ENCODE measurements at regions of chr1 and their contacts with region 1.

Region 1: GRCh38 chr1:50774759-50775351 is 185.2 kb downstream of the FAF1 start:
- DNase-seq: no peak
- ATAC-seq: no peak
- H3K4me3 ChIP-seq: no peak overlapping the region
- H3K27ac ChIP-seq: no peak overlapping the region
- H3K4me1 ChIP-seq: no peaks in the 10 kb centered on the region
- H3K27me3 ChIP-seq: no peaks in the 10 kb centered on the region

Region 2: DNA sequence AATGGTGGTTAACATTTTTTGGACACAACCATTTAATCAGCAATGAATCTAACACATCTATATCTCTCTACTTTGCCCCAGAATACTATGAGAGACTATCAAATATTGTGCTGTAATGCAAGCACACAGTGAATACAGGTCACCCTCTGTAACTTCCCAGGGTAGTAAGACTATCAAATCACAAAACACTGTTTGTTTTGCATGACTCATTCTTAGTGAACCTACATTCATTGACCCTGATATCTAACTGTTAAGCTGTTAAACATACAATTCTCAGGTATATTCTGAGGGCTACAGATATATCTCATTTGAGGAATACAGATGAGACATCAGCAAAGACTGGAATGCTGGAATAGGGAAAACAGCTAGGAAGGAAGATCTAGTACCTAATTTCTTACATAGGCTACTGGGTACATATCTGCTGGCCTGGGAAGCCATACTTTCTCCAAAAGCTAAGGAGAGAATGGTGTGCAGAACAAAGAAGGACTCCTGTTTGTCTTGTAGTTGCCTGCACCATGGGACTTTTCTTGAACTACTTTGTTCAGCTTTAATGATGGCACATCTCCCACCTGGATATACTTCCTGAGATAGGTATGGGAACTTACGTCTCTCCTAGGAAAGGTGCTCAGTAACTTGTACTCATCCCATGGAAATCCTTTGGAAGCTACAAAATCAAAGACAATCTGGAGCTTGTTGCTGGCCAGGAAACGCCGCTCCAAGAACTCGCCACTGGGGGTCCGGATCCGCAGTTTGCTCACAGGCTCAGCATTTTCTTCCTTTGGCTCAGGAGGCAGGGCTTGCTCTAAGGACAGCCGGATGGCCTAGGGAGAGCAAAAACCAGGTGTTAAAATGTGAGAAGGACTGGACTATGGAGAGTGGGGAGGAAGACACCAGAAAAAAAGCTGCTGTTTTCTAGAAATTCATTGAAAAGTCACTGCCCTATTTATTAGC is 299.7 kb before region 1 on chr1:
- intact Hi-C with region 1: no loop called
- DNase-seq: no peak
- ATAC-seq: no peak
- H3K4me3 ChIP-seq: no peak overlapping the region
- H3K27ac ChIP-seq: no peak overlapping the region
- H3K4me1 ChIP-seq: no peaks in the 10 kb centered on the region
- H3K27me3 ChIP-seq: no peaks in the 10 kb centered on the region

Region 3: GRCh38 chr1:50929376-50929958 is 154.6 kb after region 1 on chr1:
- intact Hi-C with region 1: loop called in 1 of 2 experiments (anchors 10 kb)
- DNase-seq: no peak
- ATAC-seq: no peak
- H3K4me3 ChIP-seq: no peak overlapping the region
- H3K27ac ChIP-seq: no peak overlapping the region
- H3K4me1 ChIP-seq: no peaks in the 10 kb centered on the region
- H3K27me3 ChIP-seq: no peaks in the 10 kb centered on the region

Region 4: GRCh38 chr1:50959913-50960844 is 185.3 kb after region 1 on chr1 and contains the start of gene FAF1:
- intact Hi-C with region 1: loop called in 1 of 2 experiments (anchors 10 kb)
- DNase-seq: peak; percentile 98 to 99
- ATAC-seq: peak; percentile 100
- H3K4me3 ChIP-seq: peak within 1 kb of the TSS; percentile 84 to 94
- H3K27ac ChIP-seq: peak within 1 kb of the TSS in 1 of 2 donors; percentile 72
- H3K4me1 ChIP-seq: no peaks in the 10 kb centered on the region
- H3K27me3 ChIP-seq: no peaks in the 10 kb centered on the region
- total RNA-seq, gene FAF1: 54.7 to 56.1 TPM

Region 5: DNA sequence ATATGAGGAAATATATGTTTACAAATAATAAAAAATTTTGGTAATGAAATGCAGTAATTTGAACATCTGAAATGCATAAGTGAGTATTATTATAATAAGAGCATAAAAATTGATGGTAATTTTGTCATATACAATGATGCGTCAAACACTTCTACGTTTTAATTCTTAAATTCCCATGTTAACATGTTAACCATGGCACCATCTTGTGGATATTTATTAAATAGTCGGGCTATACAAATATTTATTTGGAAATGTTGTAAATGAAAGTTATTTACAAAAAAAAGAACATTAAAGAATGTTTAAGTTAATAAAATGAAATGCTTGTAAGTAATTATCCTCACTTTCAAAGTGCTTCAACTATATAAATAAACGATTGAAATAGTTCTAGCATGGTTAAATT is 270.0 kb after region 1 on chr1:
- intact Hi-C with region 1: loop called (anchors 5 to 10 kb)
- DNase-seq: no peak
- ATAC-seq: no peak
- H3K4me3 ChIP-seq: no peak overlapping the region
- H3K27ac ChIP-seq: no peak overlapping the region
- H3K4me1 ChIP-seq: no peaks in the 10 kb centered on the region
- H3K27me3 ChIP-seq: no peaks in the 10 kb centered on the region

Region 6: DNA sequence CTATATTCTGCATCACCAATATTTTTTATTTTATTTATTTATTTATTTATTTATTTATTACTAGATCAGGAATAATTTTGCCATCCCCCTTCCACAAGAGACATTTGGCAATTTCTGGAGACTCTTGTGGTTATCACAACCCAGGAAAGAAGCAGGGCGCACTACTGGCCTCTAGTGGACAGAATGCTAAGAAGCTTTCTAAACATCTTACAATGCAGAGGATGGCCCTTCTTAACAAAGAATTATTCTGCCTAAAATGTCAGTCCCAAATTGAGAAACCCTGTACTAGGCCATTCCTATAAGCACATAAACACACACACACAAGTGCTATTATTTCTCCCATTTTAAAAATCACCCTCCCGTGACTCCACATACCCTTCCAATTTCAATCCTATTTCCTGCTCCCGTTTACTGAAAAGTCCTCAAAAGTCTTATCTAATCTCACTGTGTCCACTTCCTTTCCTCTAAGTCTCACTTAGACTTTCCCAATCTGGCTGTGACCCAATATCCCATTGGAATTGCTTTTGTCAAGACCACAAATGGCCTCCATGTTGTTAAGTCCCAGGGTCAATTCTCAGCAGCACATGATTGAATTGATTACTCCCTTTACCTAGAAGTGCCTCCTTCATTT is 417.5 kb after region 1 on chr1:
- intact Hi-C with region 1: loop called (anchors 2 kb)
- DNase-seq: peak; percentile 74 to 83
- ATAC-seq: no peak
- H3K4me3 ChIP-seq: no peak overlapping the region
- H3K27ac ChIP-seq: no peak overlapping the region
- H3K4me1 ChIP-seq: no peaks in the 10 kb centered on the region
- H3K27me3 ChIP-seq: no peaks in the 10 kb centered on the region